ENCODE measurements at regions of chr1 and their contacts with region 1.

Region 1: GRCh38 chr1:84603941-84604830 is 29.9 kb upstream of the CTBS start:
- DNase-seq: peak; percentile 88
- H3K4me3 ChIP-seq: peak overlapping the region; percentile 33 to 51 (median 43)
- H3K27ac ChIP-seq: peak overlapping the region; percentile 43 to 68 (median 60)
- H3K4me1 ChIP-seq: peaks cover 14 to 28% (median 22%) of the 10 kb centered on the region in 4 donors
- H3K27me3 ChIP-seq: no peaks in the 10 kb centered on the region
- CTCF ChIP-seq: peak; percentile 71 to 77 (median 74)
- EP300 ChIP-seq: no peak
- POLR2A ChIP-seq: no peak

Region 2: DNA sequence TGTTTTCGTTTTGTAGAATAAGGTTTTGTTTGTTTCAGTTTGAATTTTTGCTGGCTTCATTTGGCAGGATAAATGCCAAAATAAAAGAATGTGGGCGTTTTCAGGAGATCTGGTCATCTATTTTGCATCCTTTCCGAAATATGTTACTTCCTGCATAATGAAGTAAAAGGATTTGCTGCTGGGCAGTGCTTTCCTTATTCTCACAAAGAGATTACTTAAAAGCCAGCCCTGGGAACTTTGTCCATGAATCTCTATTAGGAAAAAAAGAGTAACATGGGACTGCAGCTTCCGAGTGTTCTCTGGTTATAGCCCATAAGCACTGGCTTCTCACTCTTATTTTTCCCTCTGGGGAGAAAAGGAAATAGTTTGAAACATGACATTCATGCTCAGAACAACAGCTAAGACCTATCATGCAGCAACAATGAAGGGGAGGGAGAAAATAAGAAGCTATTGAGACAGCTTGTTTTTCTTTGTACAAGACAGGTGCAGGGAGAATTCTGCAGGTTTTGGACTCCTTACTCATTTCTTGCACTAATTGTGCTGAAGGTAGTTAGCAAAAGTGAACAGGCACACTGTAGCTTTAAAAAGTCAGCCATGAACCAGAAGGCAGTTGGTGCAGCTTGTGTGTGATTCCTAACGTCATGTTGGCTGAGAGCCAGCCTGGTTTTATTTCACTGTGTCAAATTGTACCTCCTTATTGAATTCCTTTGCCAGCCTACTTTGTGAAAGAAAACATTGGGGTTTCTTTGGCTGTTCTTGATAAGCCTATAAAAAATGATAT is 303.0 kb before region 1 on chr1 and contains the start of gene SAMD13:
- intact Hi-C with region 1: loop called (anchors 10 kb)
- DNase-seq: no peak
- H3K4me3 ChIP-seq: peak within 1 kb of the TSS; percentile 33 to 50 (median 44)
- H3K27ac ChIP-seq: peak within 1 kb of the TSS; percentile 43 to 49 (median 46)
- H3K4me1 ChIP-seq: peaks cover 9 to 57% (median 49%) of the 10 kb centered on the region in 4 donors
- H3K27me3 ChIP-seq: no peaks in the 10 kb centered on the region
- CTCF ChIP-seq: no peak
- EP300 ChIP-seq: no peak
- POLR2A ChIP-seq: no peak
- total RNA-seq, gene SAMD13: 0.33 to 2.5 (median 2.1) TPM in 3 of 4 donors, not detected in the other

Region 3: DNA sequence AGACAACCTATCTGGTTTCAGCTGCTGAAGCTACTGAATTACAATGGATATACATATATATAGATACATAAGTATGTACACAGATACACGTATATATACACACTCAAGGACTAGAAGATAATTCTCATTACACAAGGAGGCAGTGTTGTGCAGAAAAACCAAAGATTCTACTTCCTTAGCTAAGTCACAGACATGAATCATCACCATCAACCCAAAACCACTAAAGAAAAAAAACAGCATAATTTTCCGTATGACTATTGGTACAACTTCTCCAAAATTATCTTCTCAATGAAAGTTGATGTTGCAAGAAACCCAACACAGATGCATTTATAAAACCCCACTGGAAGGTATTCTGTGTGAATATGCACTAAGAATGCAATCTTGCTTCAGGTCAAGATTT is 161.9 kb before region 1 on chr1:
- intact Hi-C with region 1: loop called (anchors 5 kb)
- DNase-seq: no peak
- H3K4me3 ChIP-seq: no peak overlapping the region
- H3K27ac ChIP-seq: no peak overlapping the region
- H3K4me1 ChIP-seq: no peaks in the 10 kb centered on the region
- H3K27me3 ChIP-seq: peaks cover 0 to 10% (median 0%) of the 10 kb centered on the region in 4 donors
- CTCF ChIP-seq: peak; percentile 45 to 63 (median 46)
- EP300 ChIP-seq: no peak
- POLR2A ChIP-seq: no peak

Region 4: DNA sequence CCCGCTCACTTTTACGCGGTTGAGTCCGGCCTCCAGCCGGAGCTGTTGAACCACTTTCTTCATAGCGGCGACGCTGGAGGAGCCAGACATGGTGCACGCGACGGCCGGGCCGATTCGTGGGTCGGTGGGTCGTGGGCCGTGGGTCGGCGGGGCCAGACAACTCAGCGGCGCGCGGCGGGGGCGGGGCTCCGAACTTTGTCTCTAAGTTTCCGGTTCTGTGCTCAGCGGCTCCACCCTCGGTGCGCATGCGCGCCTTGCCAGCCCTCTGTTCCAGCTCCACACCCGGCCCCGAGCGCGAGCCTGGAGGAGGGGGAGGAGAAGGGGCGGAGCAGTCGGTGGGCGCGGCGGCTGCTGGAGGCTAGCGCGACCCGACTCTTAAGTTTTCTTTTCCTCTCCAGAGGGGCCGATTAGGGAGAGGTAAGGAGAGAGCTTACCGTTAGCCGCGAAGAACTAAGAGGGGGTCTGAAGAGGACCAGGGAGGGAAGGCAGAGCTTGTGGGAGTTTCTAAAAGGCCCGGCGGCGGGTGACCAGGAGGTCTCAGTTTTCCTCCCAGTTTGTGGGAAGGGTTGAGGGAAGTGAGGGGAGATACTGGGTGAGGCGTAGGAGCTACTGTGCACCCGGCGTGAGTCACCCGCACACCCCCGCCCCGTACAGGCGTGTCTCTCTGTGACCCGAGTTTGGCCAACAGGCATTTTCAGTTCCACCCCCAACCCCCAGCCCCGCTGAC is 98.0 kb before region 1 on chr1 and contains the starts of genes GNG5 and SPATA1:
- intact Hi-C with region 1: loop called (anchors 2 kb)
- DNase-seq: peak; percentile 99
- H3K4me3 ChIP-seq: peak within 1 kb of the TSS; percentile 77 to 85 (median 78)
- H3K27ac ChIP-seq: peak within 1 kb of the TSS; percentile 94 to 97 (median 96)
- H3K4me1 ChIP-seq: peaks cover 40 to 49% (median 44%) of the 10 kb centered on the region in 4 donors
- H3K27me3 ChIP-seq: no peaks in the 10 kb centered on the region
- CTCF ChIP-seq: no peak
- EP300 ChIP-seq: no peak
- POLR2A ChIP-seq: peak; percentile 63
- total RNA-seq, gene GNG5: 62.6 to 79.3 (median 74.5) TPM
- total RNA-seq, gene SPATA1: 0.19 to 2.7 (median 0.42) TPM in 3 of 4 donors, not detected in the other

Region 5: DNA sequence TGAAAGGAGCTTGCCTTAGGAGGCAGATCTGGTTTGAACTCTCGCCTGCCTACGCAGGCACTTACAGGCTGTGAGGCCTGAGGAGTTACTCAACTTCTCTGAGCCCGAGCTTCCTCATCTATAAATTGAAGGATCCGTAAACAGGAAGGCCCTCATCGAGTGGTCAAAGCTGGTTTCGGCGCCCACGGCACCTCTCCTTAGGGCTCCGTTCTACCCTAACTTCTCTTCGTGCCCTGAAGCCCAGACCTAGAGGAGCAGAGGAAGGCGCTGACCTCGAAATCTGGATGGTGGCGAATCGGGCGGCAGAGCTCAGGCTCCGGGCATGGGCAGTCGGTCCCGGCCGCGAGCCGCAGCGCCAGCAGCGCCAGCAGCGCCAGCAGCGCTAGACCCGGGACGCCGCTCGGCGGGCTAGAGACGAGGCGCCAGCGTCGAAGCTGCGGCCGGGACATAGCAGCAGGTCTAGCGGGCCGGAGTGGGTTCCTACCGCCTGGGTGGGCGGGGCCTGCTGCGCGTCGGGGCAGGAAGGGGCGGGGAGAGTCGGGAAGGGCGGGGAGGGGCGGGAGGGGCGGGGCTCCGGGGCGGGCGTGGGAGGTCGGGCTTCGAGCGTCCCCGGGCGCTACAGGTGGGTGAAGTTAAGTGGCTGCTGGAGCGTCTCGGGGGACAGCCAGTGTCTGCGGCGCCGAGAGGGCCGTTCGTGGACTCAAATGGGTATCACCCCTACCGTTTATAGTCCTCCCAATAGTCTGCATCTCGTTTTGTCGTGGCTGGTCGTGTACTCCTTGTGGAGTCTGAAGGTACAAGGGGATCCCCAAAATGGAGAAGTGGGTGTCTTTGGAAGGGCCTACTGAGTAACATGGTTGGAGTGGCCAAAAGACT is 30.0 kb before region 1 on chr1 and contains the start of gene CTBS:
- intact Hi-C with region 1: loop called (anchors 1 kb)
- DNase-seq: peak; percentile 95
- H3K4me3 ChIP-seq: peak within 1 kb of the TSS; percentile 64 to 75 (median 72)
- H3K27ac ChIP-seq: peak within 1 kb of the TSS; percentile 95 to 97 (median 96)
- H3K4me1 ChIP-seq: peaks cover 15 to 26% (median 21%) of the 10 kb centered on the region in 4 donors
- H3K27me3 ChIP-seq: no peaks in the 10 kb centered on the region
- CTCF ChIP-seq: no peak
- EP300 ChIP-seq: no peak
- POLR2A ChIP-seq: peak; percentile 67
- total RNA-seq, gene CTBS: 7.1 to 8.9 (median 8.5) TPM

Region 6: DNA sequence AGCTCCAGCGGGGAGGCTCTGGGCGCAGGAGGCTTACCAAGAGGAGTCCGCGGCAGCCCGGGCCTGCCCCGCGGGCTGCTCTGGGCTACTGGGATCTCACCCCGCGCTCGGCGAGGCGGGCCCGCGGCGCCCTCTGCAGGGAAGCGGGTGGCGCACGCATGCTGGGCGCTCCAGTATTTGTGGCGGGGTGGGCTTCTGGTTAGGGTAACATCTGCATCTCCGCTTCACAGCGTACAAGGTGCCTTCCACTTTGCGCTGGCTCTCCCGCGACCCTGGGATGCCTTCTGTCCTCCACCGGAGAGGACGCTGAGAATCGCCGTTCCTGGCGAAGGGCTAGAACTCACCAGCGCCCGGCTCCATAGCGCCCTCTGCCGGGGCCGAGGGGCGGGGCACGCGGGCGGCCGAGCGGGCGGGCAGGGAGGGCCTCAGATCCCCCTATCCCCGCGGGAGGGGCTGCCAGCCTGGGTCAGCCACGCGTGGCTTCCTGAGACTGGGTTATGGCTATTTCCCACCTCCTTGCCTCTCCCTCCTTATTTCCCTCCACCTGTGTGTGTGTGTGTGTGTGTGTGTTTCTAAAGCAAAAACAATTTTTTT is 16.6 kb after region 1 on chr1:
- intact Hi-C with region 1: no loop called
- DNase-seq: no peak
- H3K4me3 ChIP-seq: peak overlapping the region; percentile 58 to 82 (median 65)
- H3K27ac ChIP-seq: peak overlapping the region; percentile 67 to 83 (median 78)
- H3K4me1 ChIP-seq: peaks cover 18 to 46% (median 41%) of the 10 kb centered on the region in 4 donors
- H3K27me3 ChIP-seq: no peaks in the 10 kb centered on the region
- CTCF ChIP-seq: peak; percentile 84 to 99 (median 92)
- EP300 ChIP-seq: no peak
- POLR2A ChIP-seq: no peak

Region 7: DNA sequence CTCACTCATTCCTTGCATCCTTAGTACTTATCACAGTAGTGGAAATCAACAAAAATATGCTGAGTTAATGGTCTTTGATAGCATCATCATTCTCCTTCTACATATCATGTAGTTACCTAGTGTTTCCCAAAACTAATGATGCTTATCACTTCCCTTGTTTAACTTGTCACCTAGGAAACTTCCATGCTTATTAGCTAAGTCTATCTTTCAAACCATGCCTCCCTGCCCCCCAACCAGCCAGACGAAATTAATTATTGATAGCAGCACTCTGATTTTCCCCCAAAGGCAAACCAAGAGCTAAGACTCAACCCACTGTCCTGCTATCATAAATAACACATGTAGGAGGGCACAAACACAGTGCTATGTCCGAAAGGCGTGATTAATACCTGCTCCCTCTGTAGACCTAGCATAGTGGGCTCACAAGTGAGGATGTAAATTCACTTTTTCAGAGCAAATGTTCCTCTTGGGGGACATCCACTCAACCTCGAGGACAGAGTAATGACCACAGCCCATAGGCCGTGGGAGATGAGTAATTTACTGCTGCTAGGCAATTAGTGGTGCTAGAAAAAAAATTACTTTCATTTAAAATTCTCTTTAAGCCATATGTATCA is 314.6 kb after region 1 on chr1:
- intact Hi-C with region 1: no loop called
- DNase-seq: no peak
- H3K4me3 ChIP-seq: no peak overlapping the region
- H3K27ac ChIP-seq: no peak overlapping the region
- H3K4me1 ChIP-seq: no peaks in the 10 kb centered on the region
- H3K27me3 ChIP-seq: no peaks in the 10 kb centered on the region
- CTCF ChIP-seq: no peak
- EP300 ChIP-seq: no peak
- POLR2A ChIP-seq: no peak